H1 (cell line): ENCODE measurements at regions of chr5 and their contacts with region 1.

Region 1: GRCh38 chr5:38660194-38660668 is 103.8 kb upstream of the LIFR start:
- DNase-seq: no peak
- H3K4me3 ChIP-seq: peak overlapping the region in 1 of 4 experiments; percentile 17; a peak in 1 of 8 replicates
- H3K27ac ChIP-seq: no peak overlapping the region
- H3K4me1 ChIP-seq: no peaks in the 10 kb centered on the region
- H3K27me3 ChIP-seq: no peaks in the 10 kb centered on the region
- CTCF ChIP-seq: no peak
- EP300 ChIP-seq: no peak
- POLR2A ChIP-seq: peak in 1 of 2 experiments; percentile 40; a peak in 1 of 3 replicates
- RAD21 ChIP-seq: no peak

Region 2: GRCh38 chr5:38672059-38672788 is 12.0 kb after region 1 on chr5:
- CTCF ChIA-PET with region 1: interaction called, 32 read pairs
- POLR2A ChIA-PET with region 1: no interaction called
- DNase-seq: no peak
- H3K4me3 ChIP-seq: no peak overlapping the region
- H3K27ac ChIP-seq: no peak overlapping the region
- H3K4me1 ChIP-seq: no peaks in the 10 kb centered on the region
- H3K27me3 ChIP-seq: no peaks in the 10 kb centered on the region
- CTCF ChIP-seq: no peak
- EP300 ChIP-seq: no peak
- POLR2A ChIP-seq: no peak
- RAD21 ChIP-seq: no peak

Region 3: DNA sequence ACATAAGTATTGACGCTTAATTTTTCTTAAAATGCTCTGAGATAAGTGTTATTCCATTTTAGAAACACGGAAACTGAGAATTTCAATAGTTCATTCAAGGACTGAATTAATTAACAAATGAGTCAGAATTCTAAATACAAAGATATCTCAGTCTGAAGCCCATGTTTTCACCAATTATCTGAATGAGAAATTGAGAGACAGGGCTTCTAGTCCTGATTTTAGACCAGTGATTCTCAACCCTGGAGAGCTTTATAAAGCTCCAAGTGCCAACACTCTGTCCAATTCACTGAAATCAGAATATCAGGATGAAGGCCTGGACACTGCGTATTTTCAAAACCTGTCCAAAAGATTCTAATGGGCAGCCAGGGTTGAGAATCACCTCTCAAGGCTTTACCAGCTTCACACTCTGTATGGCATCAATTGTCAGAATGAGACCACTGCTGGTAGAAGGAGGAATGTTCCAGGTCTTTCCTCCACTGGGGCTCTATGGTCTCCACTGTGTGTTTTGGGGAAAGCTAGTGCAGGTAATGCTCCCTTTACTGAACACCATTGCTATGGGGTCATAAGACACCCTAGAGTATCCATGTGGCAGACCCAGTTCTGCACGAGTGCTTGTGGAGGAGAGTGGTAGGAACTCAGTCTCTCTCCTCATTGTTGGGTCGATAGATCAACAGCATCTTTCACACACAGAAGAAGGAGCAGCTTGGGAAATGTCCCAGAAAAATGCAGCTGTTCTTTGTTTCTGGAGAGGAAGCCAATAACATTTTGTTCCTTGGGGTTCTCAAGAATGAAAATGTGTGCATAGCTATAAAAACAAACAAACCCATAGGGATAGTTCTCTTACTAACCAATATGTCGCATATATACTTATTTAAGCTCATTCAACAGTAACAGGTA is 85.9 kb after region 1 on chr5:
- CTCF ChIA-PET with region 1: no interaction called
- POLR2A ChIA-PET with region 1: no interaction called
- DNase-seq: no peak
- H3K4me3 ChIP-seq: no peak overlapping the region
- H3K27ac ChIP-seq: no peak overlapping the region
- H3K4me1 ChIP-seq: no peaks in the 10 kb centered on the region
- H3K27me3 ChIP-seq: no peaks in the 10 kb centered on the region
- CTCF ChIP-seq: no peak
- EP300 ChIP-seq: no peak
- POLR2A ChIP-seq: no peak
- RAD21 ChIP-seq: no peak